B cell (primary cell): ENCODE measurements at regions of chr4 and their contacts with region 1.

Region 1: DNA sequence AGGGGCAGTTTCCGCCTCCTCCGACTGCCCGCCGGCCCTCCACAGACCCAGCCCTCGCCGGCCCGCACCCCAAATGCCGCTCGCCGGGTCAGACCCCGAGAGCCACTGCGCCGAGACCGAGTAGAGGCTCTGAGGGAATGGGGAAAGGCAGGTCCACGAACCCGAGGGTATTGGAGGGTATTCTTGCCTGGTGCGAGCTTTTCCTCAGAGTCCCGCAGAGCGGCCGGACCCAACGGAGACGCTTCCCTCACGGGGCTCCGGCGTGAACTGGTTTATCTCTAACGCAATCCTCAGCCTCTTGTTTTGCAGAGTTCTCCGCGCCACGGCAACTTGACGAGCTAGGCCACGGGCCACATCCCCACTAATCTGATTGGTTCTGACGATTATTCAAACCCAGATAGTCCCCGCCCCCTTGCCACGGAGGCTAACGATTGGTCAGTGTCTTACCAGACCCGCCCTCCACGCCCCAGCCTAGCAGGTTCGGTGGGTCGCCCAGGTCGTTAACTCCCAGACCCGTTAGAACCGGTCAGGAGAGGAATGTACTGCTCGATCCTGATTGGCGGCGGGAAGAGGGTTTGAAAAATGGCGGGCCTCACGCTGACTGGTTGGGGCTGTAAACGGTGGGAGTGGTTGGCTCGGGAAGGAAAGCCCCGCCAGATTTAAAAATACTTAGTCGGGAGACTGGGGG is at the start of gene HMGB2:
- DNase-seq: peak; percentile 100
- ATAC-seq: peak; percentile 93
- H3K4me3 ChIP-seq: peak within 1 kb of the TSS; percentile 74 to 99 (median 94)
- H3K4me3 Mint-ChIP-seq: peak within 1 kb of the TSS; percentile 99
- H3K27ac ChIP-seq: peak within 1 kb of the TSS; percentile 95 to 99
- H3K27ac Mint-ChIP-seq: peak within 1 kb of the TSS; percentile 100
- H3K4me1 ChIP-seq: peaks cover 16 to 18% of the 10 kb centered on the region in 2 donors
- H3K4me1 Mint-ChIP-seq: peaks cover 30% of the 10 kb centered on the region
- H3K27me3 ChIP-seq: no peaks in the 10 kb centered on the region
- H3K27me3 Mint-ChIP-seq: peaks cover 4% of the 10 kb centered on the region
- CTCF ChIP-seq: no peak
- total RNA-seq, gene HMGB2: 81.5 and 82.5 TPM in 2 replicates

Region 2: GRCh38 chr4:173168396-173169177 is 165.6 kb before region 1 on chr4 and contains the start of gene GALNT7:
- CTCF ChIA-PET with region 1: no interaction called
- POLR2A ChIA-PET with region 1: interaction called, 3 read pairs
- intact Hi-C with region 1: loop called (anchors 1 kb)
- DNase-seq: peak; percentile 75
- ATAC-seq: peak; percentile 43
- H3K4me3 ChIP-seq: peak within 1 kb of the TSS; percentile 71 to 93 (median 74)
- H3K4me3 Mint-ChIP-seq: peak within 1 kb of the TSS; percentile 97
- H3K27ac ChIP-seq: peak within 1 kb of the TSS; percentile 65 to 85
- H3K27ac Mint-ChIP-seq: peak within 1 kb of the TSS; percentile 95
- H3K4me1 ChIP-seq: peaks cover 26 to 34% of the 10 kb centered on the region in 2 donors
- H3K4me1 Mint-ChIP-seq: peaks cover 40% of the 10 kb centered on the region
- H3K27me3 ChIP-seq: no peaks in the 10 kb centered on the region
- H3K27me3 Mint-ChIP-seq: no peaks in the 10 kb centered on the region
- CTCF ChIP-seq: no peak
- total RNA-seq, gene GALNT7: 23.7 and 26.8 TPM in 2 replicates

Region 3: DNA sequence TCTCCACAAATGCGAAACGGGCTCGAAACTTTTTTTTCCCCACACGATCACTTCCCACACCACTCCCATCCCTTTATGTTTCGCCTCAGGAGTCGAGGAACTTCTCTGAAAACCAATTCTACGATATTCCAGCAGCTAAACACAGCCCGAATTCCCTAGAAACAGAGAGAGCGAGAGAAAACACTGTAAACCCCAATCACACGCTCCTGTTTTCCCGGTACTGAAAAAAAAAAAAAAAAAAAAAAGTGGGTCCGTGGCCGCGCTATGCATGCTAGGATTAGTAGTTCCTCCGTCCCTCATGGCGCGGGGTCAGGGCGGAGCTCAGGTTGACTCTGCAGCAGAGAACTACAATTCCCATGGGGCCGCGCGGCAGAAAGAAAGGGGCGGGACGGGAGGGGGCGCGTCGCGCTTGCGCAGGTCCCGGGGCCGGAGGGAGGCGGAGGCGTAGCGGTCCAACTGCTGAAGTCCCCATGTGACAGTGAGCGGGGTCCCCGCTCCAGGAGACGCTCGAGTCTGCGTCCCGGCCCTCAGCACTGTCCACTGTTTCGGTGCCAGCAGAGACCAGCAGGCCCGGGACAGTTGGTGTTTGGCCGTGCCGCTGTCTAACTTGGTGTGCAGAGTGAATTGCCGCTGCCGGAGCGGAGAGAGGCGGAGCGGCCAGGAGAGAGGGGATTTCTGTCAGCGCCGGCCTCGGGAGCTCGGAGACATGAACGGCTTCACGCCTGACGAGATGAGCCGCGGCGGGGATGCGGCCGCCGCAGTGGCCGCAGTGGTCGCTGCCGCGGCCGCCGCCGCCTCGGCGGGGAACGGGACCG is 36.5 kb after region 1 on chr4 and contains the start of gene SAP30:
- CTCF ChIA-PET with region 1: interaction called, 28 read pairs
- POLR2A ChIA-PET with region 1: interaction called, 134 read pairs
- intact Hi-C with region 1: loop called (anchors 1 kb)
- DNase-seq: peak; percentile 99
- ATAC-seq: peak; percentile 83
- H3K4me3 ChIP-seq: peak within 1 kb of the TSS; percentile 81 to 100 (median 99)
- H3K4me3 Mint-ChIP-seq: peak within 1 kb of the TSS; percentile 100
- H3K27ac ChIP-seq: peak within 1 kb of the TSS; percentile 84 to 88
- H3K27ac Mint-ChIP-seq: peak within 1 kb of the TSS; percentile 88
- H3K4me1 ChIP-seq: peaks cover 9 to 12% of the 10 kb centered on the region in 2 donors
- H3K4me1 Mint-ChIP-seq: peaks cover 21% of the 10 kb centered on the region
- H3K27me3 ChIP-seq: peaks cover 0 to 2% (median 0%) of the 10 kb centered on the region in 4 experiments
- H3K27me3 Mint-ChIP-seq: peaks cover 3% of the 10 kb centered on the region
- CTCF ChIP-seq: no peak
- total RNA-seq, gene SAP30: 2.5 and 2.7 TPM in 2 replicates

Region 4: DNA sequence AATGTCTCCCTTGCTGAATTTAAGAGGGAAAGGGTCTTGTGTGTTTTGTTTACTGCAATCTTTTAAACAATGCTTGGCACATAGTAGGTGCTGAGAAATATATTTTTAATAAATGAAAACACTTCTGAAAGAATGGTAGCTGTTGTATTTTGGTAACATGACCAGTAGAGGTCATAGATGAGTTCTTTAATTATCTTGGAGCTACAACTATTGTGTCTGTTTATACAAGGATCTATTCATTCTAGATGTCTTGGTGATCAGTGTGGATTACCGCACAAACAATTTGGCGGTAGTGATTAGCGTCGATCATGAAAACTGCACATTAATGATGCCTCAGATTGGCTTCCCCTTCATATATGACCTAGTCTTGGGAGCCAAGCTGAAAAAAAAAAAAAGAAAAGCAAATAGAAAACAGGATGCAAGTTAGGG is 86.1 kb after region 1 on chr4:
- CTCF ChIA-PET with region 1: interaction called, 12 read pairs
- POLR2A ChIA-PET with region 1: interaction called, 5 read pairs
- intact Hi-C with region 1: no loop called
- DNase-seq: peak; percentile 19
- ATAC-seq: no peak
- H3K4me3 ChIP-seq: no peak overlapping the region
- H3K4me3 Mint-ChIP-seq: no peak overlapping the region
- H3K27ac ChIP-seq: no peak overlapping the region
- H3K27ac Mint-ChIP-seq: no peak overlapping the region
- H3K4me1 ChIP-seq: peaks cover 0 to 6% of the 10 kb centered on the region in 2 donors
- H3K4me1 Mint-ChIP-seq: peaks cover 7% of the 10 kb centered on the region
- H3K27me3 ChIP-seq: no peaks in the 10 kb centered on the region
- H3K27me3 Mint-ChIP-seq: peaks cover 2% of the 10 kb centered on the region
- CTCF ChIP-seq: peak; percentile 55

Region 5: DNA sequence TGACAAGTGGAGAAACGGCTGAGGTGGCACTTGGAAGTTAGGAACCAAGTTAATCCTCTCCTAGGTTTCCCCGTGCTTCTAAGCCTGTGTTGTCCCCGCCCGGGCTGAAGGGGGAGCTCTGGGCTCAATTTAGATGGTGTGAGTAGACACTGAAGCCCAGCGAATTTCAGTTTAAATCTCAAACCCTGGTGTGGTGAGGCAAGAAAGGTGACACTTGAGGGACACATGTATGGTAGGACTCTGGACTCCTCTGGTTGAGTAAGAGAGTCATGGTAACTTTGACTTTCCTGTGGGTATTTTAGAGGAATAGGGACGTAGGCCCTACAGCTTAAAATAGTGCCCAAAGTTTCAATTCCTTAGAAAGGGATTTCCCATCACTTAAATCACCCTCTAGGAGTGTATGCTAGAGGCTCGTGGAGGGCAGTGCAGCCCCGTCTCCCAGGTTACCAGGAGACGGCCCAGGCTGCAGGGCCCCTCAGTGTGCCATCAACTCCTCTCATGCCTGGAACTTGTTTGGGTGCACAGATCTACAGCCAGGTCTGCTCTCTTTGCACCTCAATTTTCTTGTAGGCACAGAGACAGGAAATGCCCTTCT is 171.8 kb after region 1 on chr4:
- CTCF ChIA-PET with region 1: interaction called, 4 read pairs
- POLR2A ChIA-PET with region 1: no interaction called
- intact Hi-C with region 1: loop called (anchors 5 kb)
- DNase-seq: peak; percentile 36
- ATAC-seq: no peak
- H3K4me3 ChIP-seq: peak overlapping the region in 3 of 5 experiments; percentile 7 to 31 (median 21)
- H3K4me3 Mint-ChIP-seq: peak overlapping the region; percentile 76
- H3K27ac ChIP-seq: no peak overlapping the region
- H3K27ac Mint-ChIP-seq: no peak overlapping the region
- H3K4me1 ChIP-seq: peaks cover 51 to 57% of the 10 kb centered on the region in 2 donors
- H3K4me1 Mint-ChIP-seq: peaks cover 55% of the 10 kb centered on the region
- H3K27me3 ChIP-seq: peaks cover 0 to 100% (median 72%) of the 10 kb centered on the region in 4 experiments
- H3K27me3 Mint-ChIP-seq: peaks cover 88% of the 10 kb centered on the region
- CTCF ChIP-seq: peak; percentile 33

Region 6: GRCh38 chr4:174282836-174283506 is 948.7 kb after region 1 on chr4:
- CTCF ChIA-PET with region 1: no interaction called
- POLR2A ChIA-PET with region 1: no interaction called
- intact Hi-C with region 1: loop called (anchors 2 kb)
- DNase-seq: peak; percentile 89
- ATAC-seq: peak; percentile 95
- H3K4me3 ChIP-seq: peak overlapping the region; percentile 71 to 100 (median 98)
- H3K4me3 Mint-ChIP-seq: peak overlapping the region; percentile 100
- H3K27ac ChIP-seq: peak overlapping the region; percentile 91 to 98
- H3K27ac Mint-ChIP-seq: peak overlapping the region; percentile 100
- H3K4me1 ChIP-seq: peaks cover 16 to 20% of the 10 kb centered on the region in 2 donors
- H3K4me1 Mint-ChIP-seq: peaks cover 61% of the 10 kb centered on the region
- H3K27me3 ChIP-seq: no peaks in the 10 kb centered on the region
- H3K27me3 Mint-ChIP-seq: no peaks in the 10 kb centered on the region
- CTCF ChIP-seq: no peak